Colonic mucosa (tissue), 4 donors: ENCODE measurements at regions of chr12 and their contacts with region 1.

Region 1: DNA sequence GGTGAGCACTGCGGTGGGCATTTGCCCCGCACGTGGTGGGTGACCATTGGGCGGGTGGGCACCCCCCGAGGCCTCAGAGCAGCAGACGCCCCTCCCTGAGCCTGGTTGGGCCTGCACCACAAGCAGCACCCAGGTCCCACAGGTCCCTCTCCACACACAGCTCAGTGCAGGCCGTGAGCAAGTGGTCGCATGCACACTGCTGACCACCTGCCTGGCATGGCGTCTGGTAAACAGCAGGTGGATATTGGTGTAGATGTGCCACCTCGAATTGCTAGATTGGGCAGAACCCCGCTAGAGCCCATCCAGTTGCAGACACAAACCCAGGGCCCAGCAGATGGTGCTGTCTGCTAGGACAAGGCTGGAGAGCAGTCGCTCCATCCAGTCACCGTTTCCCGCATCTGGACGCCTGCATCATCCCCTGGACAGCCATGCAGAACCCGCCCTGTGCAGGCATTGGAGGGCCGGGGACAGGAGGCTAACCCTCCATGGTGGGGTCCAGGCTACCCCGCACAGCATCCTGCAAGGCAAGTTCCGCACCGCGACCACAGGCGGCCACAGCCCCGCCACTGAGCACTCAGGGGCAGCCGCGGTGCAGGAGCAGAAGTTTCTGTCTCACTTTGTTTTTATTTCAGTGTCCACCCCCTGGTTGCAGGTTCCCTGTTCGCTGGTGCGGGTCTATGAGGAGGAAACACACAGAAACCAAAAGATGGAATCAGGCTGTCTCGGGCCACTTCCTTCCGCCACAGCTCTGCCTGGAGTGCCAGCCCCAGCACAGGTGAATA is 45.6 kb upstream of the RIMBP2 start:
- DNase-seq: peak; percentile 35
- H3K4me3 ChIP-seq: no peak overlapping the region
- H3K27ac ChIP-seq: no peak overlapping the region
- H3K4me1 ChIP-seq: no peaks in the 10 kb centered on the region
- H3K27me3 ChIP-seq: no peaks in the 10 kb centered on the region
- CTCF ChIP-seq: no peak

Region 2: DNA sequence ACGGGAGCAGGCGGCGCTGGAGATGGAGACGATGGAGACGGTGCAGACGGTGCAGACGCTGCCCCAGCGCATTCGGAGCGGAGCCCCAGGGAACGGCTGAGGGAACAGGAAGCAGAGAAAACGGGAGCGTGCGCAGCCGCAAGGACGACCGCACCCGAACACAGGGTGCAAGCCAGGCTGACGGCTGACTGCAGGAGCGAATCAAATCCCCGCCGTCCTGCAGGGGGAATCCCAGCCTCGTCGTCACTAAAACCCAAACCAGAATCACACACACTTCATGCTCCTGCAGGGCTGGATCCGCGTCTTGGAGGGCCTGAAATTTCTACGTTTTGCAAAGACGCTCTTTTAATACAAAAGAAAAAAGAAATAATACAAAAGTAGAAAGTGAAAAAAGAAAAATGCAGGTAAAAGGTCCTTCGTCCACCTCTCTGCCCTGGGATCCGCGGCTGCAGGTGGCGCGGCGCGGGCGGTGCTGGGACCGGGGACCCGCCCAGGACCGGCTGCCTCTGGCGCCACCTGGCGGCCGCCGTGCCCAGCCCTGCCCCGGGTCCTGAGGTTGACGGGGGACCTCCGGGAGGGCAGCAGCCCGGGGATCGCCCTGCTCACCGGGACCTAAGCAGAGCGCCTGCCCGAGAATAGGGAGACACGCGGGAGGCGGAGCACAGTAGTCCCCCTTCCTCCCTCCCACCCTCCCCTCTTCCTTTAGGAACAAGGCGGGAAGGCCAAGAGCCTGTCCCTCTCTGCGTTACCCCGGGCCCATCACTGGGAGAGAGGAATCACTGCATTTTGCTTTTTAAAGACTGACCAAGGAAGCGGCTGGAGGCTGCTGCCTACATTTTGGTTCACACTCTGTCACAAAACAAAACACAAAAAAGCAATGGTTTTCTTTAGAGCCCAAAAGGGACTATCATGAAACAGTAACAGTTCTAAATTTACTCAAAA is 57.2 kb after region 1 on chr12:
- intact Hi-C with region 1: loop called (anchors 5 kb)
- DNase-seq: peak; percentile 75
- H3K4me3 ChIP-seq: peak overlapping the region; percentile 43
- H3K27ac ChIP-seq: peak overlapping the region; percentile 53
- H3K4me1 ChIP-seq: peaks cover 4% of the 10 kb centered on the region
- H3K27me3 ChIP-seq: no peaks in the 10 kb centered on the region
- CTCF ChIP-seq: peak; percentile 92

Region 3: DNA sequence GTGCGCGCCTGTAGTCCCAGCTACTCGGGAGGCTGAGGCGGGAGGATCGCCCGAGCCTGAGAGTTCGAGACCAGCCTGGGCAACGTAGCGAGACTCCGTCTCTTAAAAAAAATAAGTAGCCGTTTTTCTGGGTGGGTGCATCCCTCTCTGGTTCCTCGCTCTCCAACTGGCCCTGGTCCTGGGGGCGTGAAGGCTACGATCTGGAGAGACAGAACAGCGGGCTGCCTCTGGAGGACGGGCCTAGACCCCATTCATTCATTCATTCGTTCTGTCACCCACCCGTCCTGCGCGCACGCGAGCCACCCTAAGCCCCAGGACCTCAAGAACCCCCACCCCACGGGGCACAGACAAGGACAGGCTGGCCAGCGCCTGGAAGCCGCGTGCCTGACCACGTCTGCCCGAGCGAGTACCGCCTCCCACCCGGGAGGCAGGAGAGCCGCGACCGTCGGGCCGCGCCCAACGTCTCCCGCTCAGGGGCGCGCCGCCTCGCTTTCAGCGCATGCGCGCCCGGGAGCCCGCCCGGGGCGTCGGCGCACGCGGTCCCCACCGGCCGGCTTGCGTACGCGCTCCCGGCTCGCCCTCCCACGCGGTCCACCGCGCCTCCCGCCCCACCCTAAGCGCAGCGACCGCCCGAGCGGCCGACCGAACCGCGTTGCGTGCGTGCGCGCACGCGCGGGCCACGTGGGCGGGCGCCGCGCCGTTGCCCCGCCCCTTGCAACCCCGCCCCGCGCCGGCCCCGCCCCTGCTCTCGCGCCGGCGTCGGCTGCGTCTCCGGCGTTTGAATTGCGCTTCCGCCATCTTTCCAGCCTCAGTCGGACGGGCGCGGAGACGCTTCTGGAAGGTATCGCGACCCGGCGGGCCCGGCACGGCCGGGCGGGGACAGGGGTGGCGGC is 109.8 kb after region 1 on chr12 and contains the start of gene RAN:
- intact Hi-C with region 1: no loop called
- DNase-seq: peak; percentile 89
- H3K4me3 ChIP-seq: peak within 1 kb of the TSS; percentile 80
- H3K27ac ChIP-seq: peak within 1 kb of the TSS; percentile 72
- H3K4me1 ChIP-seq: peaks cover 3% of the 10 kb centered on the region
- H3K27me3 ChIP-seq: no peaks in the 10 kb centered on the region
- CTCF ChIP-seq: no peak
- total RNA-seq, gene RAN: 374 to 847 TPM

Region 4: DNA sequence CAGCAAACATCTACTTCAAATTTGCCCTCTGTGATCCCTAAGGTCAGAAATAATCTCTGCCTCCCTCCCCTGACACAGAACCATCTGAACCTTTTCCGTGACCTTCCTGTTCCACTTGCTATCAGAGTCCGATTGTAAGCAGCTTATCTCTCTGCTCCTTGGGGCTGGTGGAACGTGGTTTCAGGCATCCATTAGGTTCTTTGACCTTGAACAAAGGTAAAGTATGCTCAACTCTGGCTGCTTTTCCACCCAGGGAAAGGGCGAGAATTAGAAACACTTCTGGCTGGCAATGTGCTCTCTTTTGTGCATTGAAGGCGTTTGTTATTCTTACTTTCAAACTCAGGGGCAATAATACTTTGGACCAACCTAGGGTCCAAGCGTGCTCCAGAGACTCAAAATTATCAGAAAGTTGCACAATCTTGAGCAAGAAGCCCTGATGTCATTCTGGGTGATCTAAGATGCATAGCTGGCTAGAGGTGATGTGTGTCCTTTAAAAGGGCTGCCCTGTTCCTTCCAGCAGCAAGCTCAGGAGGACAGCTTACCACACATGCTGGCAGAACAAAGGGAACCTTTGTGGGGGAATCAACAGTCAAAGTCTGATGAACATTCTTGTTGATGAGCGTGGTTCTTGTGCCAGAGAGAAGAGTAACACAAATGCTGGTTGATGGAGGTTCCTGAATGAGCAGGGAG is 221.7 kb after region 1 on chr12:
- intact Hi-C with region 1: no loop called
- DNase-seq: no peak
- H3K4me3 ChIP-seq: no peak overlapping the region
- H3K27ac ChIP-seq: no peak overlapping the region
- H3K4me1 ChIP-seq: no peaks in the 10 kb centered on the region
- H3K27me3 ChIP-seq: no peaks in the 10 kb centered on the region
- CTCF ChIP-seq: no peak